IMR-90 (cell line): ENCODE measurements at regions of chr10 and their contacts with region 1.

Region 1: DNA sequence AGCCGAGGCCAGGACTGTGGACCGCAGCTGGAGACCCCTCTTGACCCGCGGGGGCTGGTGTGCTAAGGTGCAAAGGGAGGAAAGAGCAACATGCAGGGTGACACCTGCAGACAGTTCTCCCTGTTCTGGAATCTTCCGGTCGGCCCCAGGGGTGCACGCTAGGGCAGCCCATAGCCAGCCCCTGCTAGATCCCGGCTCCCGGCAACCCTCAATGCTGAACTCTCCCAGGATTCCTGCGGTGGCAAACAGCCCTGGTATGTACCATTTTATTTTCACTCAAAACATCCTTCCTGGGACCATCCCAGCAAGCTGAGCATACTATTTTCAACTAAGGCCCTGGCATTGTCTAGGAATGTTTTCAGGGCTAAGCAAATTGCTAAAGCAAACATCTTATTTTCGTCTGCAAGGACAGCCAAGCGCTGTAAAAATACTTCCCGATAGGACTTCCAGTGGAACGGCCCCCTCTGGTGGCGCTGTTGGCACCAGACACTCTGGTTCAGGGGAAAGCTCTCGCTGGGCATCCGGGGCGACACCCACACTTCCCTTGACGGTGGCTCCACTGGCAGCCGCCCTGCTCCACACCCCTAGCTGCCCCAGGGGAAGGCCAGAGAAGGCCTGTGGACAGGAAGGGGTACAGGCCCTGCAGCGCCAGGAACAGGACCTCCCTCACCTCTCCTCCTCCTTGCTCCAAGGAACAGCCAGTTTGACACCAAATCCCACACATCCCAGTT is 99.4 kb downstream of the CTBP2 start:
- DNase-seq: peak; percentile 80
- ATAC-seq: peak; percentile 58
- H3K4me3 ChIP-seq: no peak overlapping the region
- H3K27ac ChIP-seq: peak overlapping the region; percentile 13; the same call in 1 of the 2 replicates
- H3K4me1 ChIP-seq: peaks cover 50% of the 10 kb centered on the region
- H3K27me3 ChIP-seq: no peaks in the 10 kb centered on the region
- CTCF ChIP-seq: peak; percentile 88
- POLR2A ChIP-seq: no peak
- RAD21 ChIP-seq: peak; percentile 84

Region 2: DNA sequence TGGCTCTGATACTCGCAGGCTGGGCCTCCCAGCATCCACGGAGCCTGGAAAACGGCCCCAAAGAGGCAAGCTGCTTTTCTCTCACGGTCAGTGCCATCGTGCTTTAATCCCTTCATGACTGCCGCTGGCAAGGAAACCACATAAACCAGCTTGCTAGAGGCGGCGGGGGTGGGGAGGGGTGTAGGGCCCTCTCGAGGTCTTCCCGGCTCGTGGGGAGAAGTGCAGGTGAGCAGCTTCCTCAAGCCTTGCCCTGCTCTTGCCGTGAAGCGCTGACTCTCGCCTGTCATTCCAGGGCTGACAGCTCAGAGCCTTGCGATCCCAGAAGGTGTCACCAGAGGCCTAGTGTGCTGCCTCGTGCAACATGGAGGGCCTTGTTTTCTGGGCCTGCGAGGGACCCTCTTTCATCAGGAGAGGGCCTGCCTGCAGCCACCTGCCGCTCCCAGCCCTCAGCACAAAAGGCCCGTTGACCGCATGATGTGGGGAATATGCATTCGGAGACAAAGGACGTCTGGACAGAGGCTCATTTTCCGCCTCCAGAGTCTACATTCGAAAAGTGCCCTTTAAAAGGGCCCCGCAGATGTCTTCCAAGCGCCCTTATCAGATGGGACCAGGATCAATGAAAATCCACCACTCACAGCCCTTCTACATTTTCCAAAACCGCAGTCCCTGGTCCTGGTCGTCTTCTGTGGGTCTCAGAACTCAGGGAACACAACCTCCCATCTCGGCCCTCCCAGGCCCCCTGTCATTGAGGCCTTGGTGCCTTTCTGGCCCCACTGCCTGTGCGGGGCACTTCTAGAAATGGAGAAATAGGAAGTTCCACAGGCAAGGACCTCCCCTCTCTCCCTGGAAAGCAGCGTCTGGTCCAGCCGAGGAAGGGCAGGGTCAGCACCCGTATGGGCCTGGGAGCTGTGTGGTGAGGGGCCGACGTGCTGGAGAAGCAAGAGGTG is 60.4 kb before region 1 on chr10:
- CTCF ChIA-PET with region 1: interaction called, 6 read pairs
- POLR2A ChIA-PET with region 1: no interaction called
- dilution Hi-C with region 1: no loop called
- in situ Hi-C with region 1: no loop called
- intact Hi-C with region 1: loop called (anchors 1 kb)
- DNase-seq: peak; percentile 57
- ATAC-seq: peak; percentile 11; the same call in 1 of the 2 replicates
- H3K4me3 ChIP-seq: no peak overlapping the region
- H3K27ac ChIP-seq: peak overlapping the region; percentile 59; the same call in 1 of the 2 replicates
- H3K4me1 ChIP-seq: peaks cover 32% of the 10 kb centered on the region
- H3K27me3 ChIP-seq: no peaks in the 10 kb centered on the region
- CTCF ChIP-seq: peak; percentile 36
- POLR2A ChIP-seq: no peak
- RAD21 ChIP-seq: peak; percentile 48; the same call in 1 of the 2 replicates

Region 3: GRCh38 chr10:125037145-125037877 is 23.7 kb before region 1 on chr10:
- CTCF ChIA-PET with region 1: interaction called, 10 read pairs
- POLR2A ChIA-PET with region 1: no interaction called
- dilution Hi-C with region 1: no loop called
- in situ Hi-C with region 1: no loop called
- intact Hi-C with region 1: no loop called
- DNase-seq: peak; percentile 80
- ATAC-seq: peak; percentile 38
- H3K4me3 ChIP-seq: no peak overlapping the region
- H3K27ac ChIP-seq: peak overlapping the region; percentile 21; the same call in 1 of the 2 replicates
- H3K4me1 ChIP-seq: peaks cover 34% of the 10 kb centered on the region
- H3K27me3 ChIP-seq: no peaks in the 10 kb centered on the region
- CTCF ChIP-seq: no peak
- POLR2A ChIP-seq: no peak
- RAD21 ChIP-seq: no peak

Region 4: GRCh38 chr10:125549653-125550052 is 488.7 kb after region 1 on chr10:
- CTCF ChIA-PET with region 1: no interaction called
- POLR2A ChIA-PET with region 1: interaction called, 18 read pairs
- dilution Hi-C with region 1: no loop called
- in situ Hi-C with region 1: no loop called
- intact Hi-C with region 1: no loop called
- DNase-seq: no peak
- ATAC-seq: no peak
- H3K4me3 ChIP-seq: no peak overlapping the region
- H3K27ac ChIP-seq: no peak overlapping the region
- H3K4me1 ChIP-seq: no peaks in the 10 kb centered on the region
- H3K27me3 ChIP-seq: no peaks in the 10 kb centered on the region; the same call in 1 of the 2 replicates
- CTCF ChIP-seq: no peak
- POLR2A ChIP-seq: no peak
- RAD21 ChIP-seq: no peak